ENCODE measurements at regions of chr16 and their contacts with region 1.

Region 1: DNA sequence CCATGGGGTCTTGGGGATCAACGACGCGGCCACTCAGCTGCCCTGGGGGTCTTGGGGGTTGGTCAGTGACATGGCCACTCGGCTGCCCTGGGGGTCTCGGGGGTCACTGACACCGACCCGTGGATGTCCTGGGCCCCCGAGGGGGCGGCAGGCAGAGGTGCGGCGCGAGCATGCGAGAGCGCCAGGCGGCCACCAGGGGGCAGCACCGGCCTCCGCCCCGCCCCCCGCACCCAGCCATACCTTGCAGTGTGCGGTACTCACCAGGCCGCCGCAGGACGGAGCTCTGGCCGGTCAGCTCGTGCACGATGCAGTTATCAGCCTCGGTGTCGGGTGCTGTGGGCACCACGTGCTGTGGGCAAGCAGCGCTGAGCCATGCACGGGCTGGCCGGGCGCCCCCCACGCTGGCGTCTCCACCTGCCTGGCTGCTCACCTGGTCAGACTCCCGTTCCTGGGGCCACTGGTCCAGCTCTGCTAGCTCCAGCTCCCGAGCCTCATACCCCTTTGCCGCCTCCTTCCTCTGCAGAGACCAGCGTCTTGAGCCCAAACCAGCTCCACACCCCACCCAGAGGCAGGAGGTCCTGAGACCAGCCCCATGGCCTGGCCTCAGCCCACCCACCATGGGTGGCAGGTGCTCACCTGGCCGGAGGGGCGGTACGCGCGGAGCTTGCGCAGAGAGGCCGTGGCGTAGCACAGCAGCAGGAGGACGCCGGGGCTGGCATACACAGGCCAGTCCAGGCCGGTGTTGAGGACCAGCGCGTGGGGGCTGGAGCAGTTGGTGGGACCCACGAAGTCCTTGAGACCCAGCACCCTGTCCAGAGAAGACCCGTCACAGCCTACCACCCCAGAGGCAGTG is 31.2 kb downstream of the CTU2 start:
- DNase-seq: peak; percentile 82
- H3K4me3 Mint-ChIP-seq: no peak overlapping the region
- H3K27ac Mint-ChIP-seq: no peak overlapping the region
- H3K4me1 Mint-ChIP-seq: peaks cover 9% of the 10 kb centered on the region
- H3K27me3 Mint-ChIP-seq: no peaks in the 10 kb centered on the region

Region 2: GRCh38 chr16:88706288-88706964 is 31.1 kb before region 1 on chr16 and contains the starts of genes CTU2 and RNF166:
- CTCF ChIA-PET with region 1: interaction called, 24 read pairs
- POLR2A ChIA-PET with region 1: no interaction called
- intact Hi-C with region 1: no loop called
- DNase-seq: peak; percentile 94
- H3K4me3 Mint-ChIP-seq: peak within 1 kb of the TSS; percentile 82
- H3K27ac Mint-ChIP-seq: peak within 1 kb of the TSS; percentile 91
- H3K4me1 Mint-ChIP-seq: peaks cover 47% of the 10 kb centered on the region
- H3K27me3 Mint-ChIP-seq: no peaks in the 10 kb centered on the region
- total RNA-seq, gene CTU2: 38.0 to 41.6 TPM
- total RNA-seq, gene RNF166: 46.4 to 55.6 TPM

Region 3: GRCh38 chr16:88759245-88759975 is 21.9 kb after region 1 on chr16:
- CTCF ChIA-PET with region 1: interaction called, 35 read pairs
- POLR2A ChIA-PET with region 1: no interaction called
- intact Hi-C with region 1: no loop called
- DNase-seq: peak; percentile 72
- H3K4me3 Mint-ChIP-seq: peak overlapping the region; percentile 18
- H3K27ac Mint-ChIP-seq: peak overlapping the region; percentile 61
- H3K4me1 Mint-ChIP-seq: peaks cover 31% of the 10 kb centered on the region
- H3K27me3 Mint-ChIP-seq: no peaks in the 10 kb centered on the region

Region 4: GRCh38 chr16:88785106-88785924 is 47.8 kb after region 1 on chr16 and contains the start of gene PIEZO1:
- CTCF ChIA-PET with region 1: interaction called, 118 read pairs
- POLR2A ChIA-PET with region 1: interaction called, 7 read pairs
- intact Hi-C with region 1: loop called (anchors 2 kb)
- DNase-seq: peak; percentile 80
- H3K4me3 Mint-ChIP-seq: peak within 1 kb of the TSS; percentile 80
- H3K27ac Mint-ChIP-seq: peak within 1 kb of the TSS; percentile 89
- H3K4me1 Mint-ChIP-seq: peaks cover 37% of the 10 kb centered on the region
- H3K27me3 Mint-ChIP-seq: no peaks in the 10 kb centered on the region
- total RNA-seq, gene PIEZO1: 221 to 234 TPM

Region 5: GRCh38 chr16:88811769-88812512 is 74.4 kb after region 1 on chr16 and contains the start of gene APRT:
- CTCF ChIA-PET with region 1: interaction called, 29 read pairs
- POLR2A ChIA-PET with region 1: interaction called, 4 read pairs
- intact Hi-C with region 1: no loop called
- DNase-seq: peak; percentile 98
- H3K4me3 Mint-ChIP-seq: peak within 1 kb of the TSS; percentile 95
- H3K27ac Mint-ChIP-seq: peak within 1 kb of the TSS; percentile 99
- H3K4me1 Mint-ChIP-seq: peaks cover 27% of the 10 kb centered on the region
- H3K27me3 Mint-ChIP-seq: no peaks in the 10 kb centered on the region
- total RNA-seq, gene APRT: 270 to 272 TPM

Measured in activated CD4-positive, alpha-beta memory T cell treated with anti-CD3 and anti-CD28 coated beads for 36 hours (primary cell).